ENCODE measurements at regions of chr5 and their contacts with region 1.

Region 1: GRCh38 chr5:171418316-171418981 is 998 bp upstream of the FGF18 start:
- DNase-seq: peak; percentile 91
- H3K4me3 Mint-ChIP-seq: peak overlapping the region; percentile 88
- H3K27ac Mint-ChIP-seq: no peak overlapping the region
- H3K4me1 Mint-ChIP-seq: peaks cover 28% of the 10 kb centered on the region
- H3K27me3 Mint-ChIP-seq: peaks cover 26% of the 10 kb centered on the region
- CTCF ChIP-seq: peak; percentile 97

Region 2: GRCh38 chr5:171462928-171463862 is 44.7 kb after region 1 on chr5:
- CTCF ChIA-PET with region 1: no interaction called
- intact Hi-C with region 1: no loop called
- DNase-seq: no peak
- H3K4me3 Mint-ChIP-seq: no peak overlapping the region
- H3K27ac Mint-ChIP-seq: no peak overlapping the region
- H3K4me1 Mint-ChIP-seq: no peaks in the 10 kb centered on the region
- H3K27me3 Mint-ChIP-seq: peaks cover 67% of the 10 kb centered on the region
- CTCF ChIP-seq: no peak

Region 3: DNA sequence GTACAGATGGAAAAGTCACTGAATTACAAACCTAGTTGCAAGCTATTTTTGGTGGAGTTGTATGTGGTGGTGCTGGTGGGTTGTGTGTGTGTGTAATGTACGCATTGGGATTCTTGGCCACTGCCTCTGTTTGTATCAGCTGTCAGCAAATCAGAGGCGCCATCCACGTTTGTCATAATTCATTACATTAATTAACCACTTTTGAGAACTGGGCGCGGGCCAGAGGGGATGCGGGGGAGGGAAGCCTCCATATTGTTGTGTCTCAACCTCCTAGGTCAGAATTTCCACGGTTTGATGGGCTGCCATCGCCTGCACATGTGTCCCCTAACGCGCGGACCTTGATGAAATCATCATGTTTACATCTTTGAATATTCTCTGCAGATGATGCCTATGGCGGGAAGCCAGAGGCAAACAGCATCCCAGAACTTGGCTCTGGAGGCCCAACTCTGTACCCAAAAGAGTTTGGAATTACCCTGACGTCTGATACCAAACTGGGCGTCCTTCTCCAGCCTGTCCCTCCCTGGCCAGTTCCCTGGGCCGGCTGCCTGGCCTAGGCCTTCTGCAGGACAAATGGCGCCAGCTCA is 55.9 kb after region 1 on chr5:
- CTCF ChIA-PET with region 1: no interaction called
- intact Hi-C with region 1: no loop called
- DNase-seq: no peak
- H3K4me3 Mint-ChIP-seq: no peak overlapping the region
- H3K27ac Mint-ChIP-seq: no peak overlapping the region
- H3K4me1 Mint-ChIP-seq: no peaks in the 10 kb centered on the region
- H3K27me3 Mint-ChIP-seq: peaks cover 84% of the 10 kb centered on the region
- CTCF ChIP-seq: no peak

Region 4: DNA sequence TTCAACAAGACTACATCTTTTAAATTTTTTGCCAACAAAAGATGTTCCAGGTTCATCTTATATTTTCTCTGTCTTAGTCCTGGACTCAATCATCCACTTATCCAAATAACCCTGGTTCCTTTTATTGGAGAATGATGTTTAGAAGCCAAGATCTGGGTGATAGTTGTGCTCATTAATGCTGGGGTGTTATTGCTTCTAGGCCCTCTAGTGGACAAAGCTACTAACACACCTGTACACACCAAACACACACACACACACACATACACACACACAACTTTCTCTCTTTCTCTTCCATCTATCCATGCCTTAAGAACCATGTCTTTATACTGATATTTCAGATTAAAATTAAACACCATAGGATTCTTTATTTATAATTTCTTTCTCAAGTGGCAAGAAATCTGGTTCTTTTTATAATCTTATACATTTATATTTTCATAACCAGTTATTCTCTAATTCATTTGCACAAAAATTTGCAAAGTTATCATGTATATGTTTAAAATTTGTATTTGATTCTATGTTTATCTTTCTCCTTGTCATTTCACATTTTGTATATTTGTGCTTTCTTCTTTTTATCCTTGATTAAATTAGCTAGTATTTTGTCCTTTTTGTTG is 188.1 kb after region 1 on chr5:
- CTCF ChIA-PET with region 1: no interaction called
- intact Hi-C with region 1: loop called (anchors 10 kb)
- DNase-seq: no peak
- H3K4me3 Mint-ChIP-seq: no peak overlapping the region
- H3K27ac Mint-ChIP-seq: no peak overlapping the region
- H3K4me1 Mint-ChIP-seq: no peaks in the 10 kb centered on the region
- H3K27me3 Mint-ChIP-seq: peaks cover 67% of the 10 kb centered on the region
- CTCF ChIP-seq: peak; percentile 29

Region 5: GRCh38 chr5:171850324-171851285 is 432.2 kb after region 1 on chr5:
- CTCF ChIA-PET with region 1: no interaction called
- intact Hi-C with region 1: loop called (anchors 5 kb)
- DNase-seq: no peak
- H3K4me3 Mint-ChIP-seq: no peak overlapping the region
- H3K27ac Mint-ChIP-seq: no peak overlapping the region
- H3K4me1 Mint-ChIP-seq: no peaks in the 10 kb centered on the region
- H3K27me3 Mint-ChIP-seq: no peaks in the 10 kb centered on the region
- CTCF ChIP-seq: no peak

Region 6: DNA sequence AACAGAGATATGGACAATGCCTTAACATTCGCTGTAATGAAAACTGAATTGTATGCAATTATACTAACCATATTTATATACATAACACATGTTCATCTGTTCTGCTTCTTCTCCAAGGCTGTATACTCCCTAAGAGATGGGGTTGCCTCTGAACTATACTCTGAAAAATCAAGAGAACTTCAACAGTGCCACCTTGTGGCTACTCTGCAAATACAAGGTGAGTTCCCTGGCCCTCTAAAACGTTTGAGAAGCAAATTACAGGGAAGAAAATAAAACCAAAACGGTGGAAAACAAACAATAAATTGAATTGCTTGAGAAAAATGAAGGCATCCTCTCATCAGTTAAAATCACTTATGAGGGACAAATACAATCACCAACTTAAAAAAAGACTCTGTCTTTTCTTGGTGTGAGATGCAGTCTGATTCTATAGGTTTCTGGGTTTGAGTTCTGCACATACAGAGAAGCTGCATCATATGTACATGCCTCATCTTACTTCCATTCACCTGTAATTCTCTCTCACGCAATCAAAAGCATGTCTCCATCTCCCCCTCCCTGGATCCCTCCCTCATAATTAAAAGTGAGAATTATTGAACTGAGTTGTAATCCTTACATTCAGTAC is 489.4 kb after region 1 on chr5:
- CTCF ChIA-PET with region 1: interaction called, 4 read pairs
- intact Hi-C with region 1: loop called (anchors 2 kb)
- DNase-seq: peak; percentile 70
- H3K4me3 Mint-ChIP-seq: no peak overlapping the region
- H3K27ac Mint-ChIP-seq: no peak overlapping the region
- H3K4me1 Mint-ChIP-seq: peaks cover 13% of the 10 kb centered on the region
- H3K27me3 Mint-ChIP-seq: no peaks in the 10 kb centered on the region
- CTCF ChIP-seq: peak; percentile 80

Region 7: GRCh38 chr5:172224996-172225395 is 806.5 kb after region 1 on chr5:
- CTCF ChIA-PET with region 1: no interaction called
- intact Hi-C with region 1: loop called (anchors 5 kb)
- DNase-seq: no peak
- H3K4me3 Mint-ChIP-seq: no peak overlapping the region
- H3K27ac Mint-ChIP-seq: no peak overlapping the region
- H3K4me1 Mint-ChIP-seq: no peaks in the 10 kb centered on the region
- H3K27me3 Mint-ChIP-seq: no peaks in the 10 kb centered on the region
- CTCF ChIP-seq: no peak

Measured in Calu3 (cell line).